ENCODE measurements at regions of chr17 and their contacts with region 1.

Region 1: GRCh38 chr17:56679115-56679766 is 85.7 kb downstream of the NOG start:
- DNase-seq: no peak
- ATAC-seq: peak in 6 of 8 donors; percentile 25 to 83 (median 60)
- H3K4me3 ChIP-seq: peak overlapping the region in 8 of 10 donors; percentile 13 to 43 (median 34)
- H3K27ac ChIP-seq: no peak overlapping the region
- H3K4me1 ChIP-seq: peaks cover 0 to 25% (median 8%) of the 10 kb centered on the region in 9 donors
- H3K27me3 ChIP-seq: peaks cover 7 to 93% (median 73%) of the 10 kb centered on the region in 7 donors
- CTCF ChIP-seq: peak in 7 of 9 donors; percentile 52 to 68 (median 58)

Region 2: GRCh38 chr17:55690105-55690508 is 989.1 kb before region 1 on chr17:
- intact Hi-C with region 1: no loop called
- DNase-seq: no peak
- ATAC-seq: peak in 1 of 8 donors; percentile 37
- H3K4me3 ChIP-seq: no peak overlapping the region
- H3K27ac ChIP-seq: no peak overlapping the region
- H3K4me1 ChIP-seq: peaks cover 0 to 38% (median 0%) of the 10 kb centered on the region in 9 donors
- H3K27me3 ChIP-seq: peaks cover 0 to 4% (median 0%) of the 10 kb centered on the region in 7 donors
- CTCF ChIP-seq: no peak

Region 3: GRCh38 chr17:56499799-56500388 is 179.3 kb before region 1 on chr17:
- intact Hi-C with region 1: loop called in 1 of 10 experiments (anchors 1 kb)
- DNase-seq: no peak
- ATAC-seq: no peak
- H3K4me3 ChIP-seq: no peak overlapping the region
- H3K27ac ChIP-seq: no peak overlapping the region
- H3K4me1 ChIP-seq: no peaks in the 10 kb centered on the region
- H3K27me3 ChIP-seq: no peaks in the 10 kb centered on the region
- CTCF ChIP-seq: peak in 7 of 9 donors; percentile 32 to 54 (median 45)

Region 4: DNA sequence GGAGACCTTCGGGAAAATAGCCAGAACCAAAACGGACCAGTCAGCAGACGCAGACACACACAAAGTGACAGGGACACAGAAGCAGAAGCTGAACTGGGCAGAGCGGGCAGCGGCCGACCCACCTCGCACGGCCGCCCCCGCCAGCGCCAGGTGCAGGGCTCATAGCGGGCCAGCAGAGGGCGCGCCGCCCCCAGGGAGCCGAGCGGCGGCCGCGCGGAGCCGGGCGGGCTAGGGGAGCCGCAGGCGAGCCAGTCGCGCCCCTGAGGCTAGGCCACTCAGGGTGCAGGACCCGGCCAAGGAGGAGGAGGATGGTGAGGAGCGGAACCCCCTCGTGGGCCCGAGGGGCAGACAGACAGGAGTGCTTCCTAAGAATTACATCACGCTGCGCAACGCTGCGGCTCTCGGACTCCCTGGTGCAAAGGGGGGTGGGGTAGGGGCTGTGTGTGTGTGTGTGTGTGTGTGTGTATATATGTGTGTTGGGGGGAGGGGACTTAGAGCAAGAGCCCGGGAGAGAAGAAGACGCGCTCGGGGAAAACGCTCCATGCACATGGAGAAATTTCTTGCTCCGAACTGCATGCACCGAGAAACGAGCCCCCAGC is 86.7 kb before region 1 on chr17:
- intact Hi-C with region 1: loop called in 4 of 10 experiments (anchors 2 to 10 kb)
- DNase-seq: peak; percentile 46 to 67
- ATAC-seq: peak; percentile 82 to 87 (median 84)
- H3K4me3 ChIP-seq: peak overlapping the region; percentile 30 to 78 (median 59)
- H3K27ac ChIP-seq: no peak overlapping the region
- H3K4me1 ChIP-seq: peaks cover 13 to 48% (median 32%) of the 10 kb centered on the region in 9 donors
- H3K27me3 ChIP-seq: peaks cover 0 to 89% (median 65%) of the 10 kb centered on the region in 7 donors
- CTCF ChIP-seq: peak; percentile 82 to 99 (median 96)

Region 5: DNA sequence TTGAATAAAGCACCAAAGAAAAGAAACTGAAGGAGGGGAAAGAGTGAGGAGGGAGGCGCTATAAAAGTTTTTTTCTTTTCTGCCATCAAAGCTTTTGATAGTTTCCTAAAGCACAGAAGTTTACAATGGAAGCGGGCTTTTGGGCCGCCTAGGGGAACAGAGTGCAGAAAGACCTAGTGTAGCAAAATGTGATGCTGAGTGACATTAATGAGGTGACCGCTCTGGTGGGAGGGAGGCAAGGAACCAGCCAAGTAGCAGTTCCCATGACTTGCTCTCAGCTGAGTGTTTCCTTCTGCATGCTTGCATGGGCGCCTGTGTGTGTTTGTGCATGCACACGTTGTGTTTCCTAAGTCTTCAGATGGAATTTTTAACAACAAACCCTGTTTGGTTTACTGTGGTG is 592.6 kb after region 1 on chr17:
- intact Hi-C with region 1: no loop called
- DNase-seq: no peak
- ATAC-seq: no peak
- H3K4me3 ChIP-seq: no peak overlapping the region
- H3K27ac ChIP-seq: no peak overlapping the region
- H3K4me1 ChIP-seq: peaks cover 0 to 35% (median 13%) of the 10 kb centered on the region in 9 donors
- H3K27me3 ChIP-seq: no peaks in the 10 kb centered on the region
- CTCF ChIP-seq: no peak

Measured in heart right ventricle (tissue), 16 donors.